Activated CD4-positive, alpha-beta T cell treated with anti-CD3 and anti-CD28 coated beads for 36 hours (primary cell): ENCODE measurements at regions of chr2 and their contacts with region 1.

Region 1: DNA sequence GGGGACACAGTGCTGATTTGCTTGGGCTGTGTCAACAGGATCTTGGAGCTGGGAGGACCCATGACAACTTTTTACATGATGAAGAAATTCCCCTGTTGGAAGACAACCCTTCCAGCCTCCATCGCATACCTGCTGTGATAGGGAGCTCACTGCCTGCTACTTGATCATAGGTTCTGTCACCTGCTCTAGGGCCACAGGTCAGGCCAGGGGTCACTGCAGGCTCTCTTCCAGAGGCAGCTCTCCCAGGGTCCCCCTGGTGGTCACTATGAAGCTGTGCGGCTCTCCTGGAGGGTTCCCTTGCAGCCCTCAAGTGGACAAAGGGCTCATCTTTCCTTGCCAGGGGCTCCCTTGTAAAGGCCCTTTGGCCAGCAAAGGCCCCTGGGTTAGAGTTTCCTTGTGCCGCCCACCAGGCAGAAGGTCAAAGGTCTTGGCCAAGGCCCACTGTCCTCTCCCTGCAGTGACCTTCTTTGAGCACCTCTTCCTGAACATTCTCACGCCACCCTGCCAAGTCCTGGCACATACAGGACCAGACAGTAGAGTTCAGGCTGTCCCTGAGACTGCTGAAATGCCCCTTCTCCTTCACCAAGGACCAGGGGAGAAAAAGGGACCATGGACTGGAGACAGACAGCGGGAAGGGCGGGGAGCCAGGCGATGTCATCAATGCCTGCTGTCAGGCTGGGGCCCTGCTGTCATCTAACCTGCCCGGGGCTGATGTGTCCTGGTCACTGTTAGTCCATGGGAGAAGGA is 345.1 kb downstream of the DYSF start:
- DNase-seq: peak; percentile 42
- ATAC-seq: no peak
- H3K4me3 Mint-ChIP-seq: no peak overlapping the region
- H3K27ac Mint-ChIP-seq: no peak overlapping the region
- H3K4me1 Mint-ChIP-seq: no peaks in the 10 kb centered on the region
- H3K27me3 Mint-ChIP-seq: no peaks in the 10 kb centered on the region

Region 2: GRCh38 chr2:71530641-71531332 is 267.7 kb before region 1 on chr2:
- CTCF ChIA-PET with region 1: interaction called, 3 read pairs
- POLR2A ChIA-PET with region 1: no interaction called
- intact Hi-C with region 1: loop called in 1 of 2 experiments (anchors 1 kb)
- DNase-seq: peak; percentile 46
- ATAC-seq: peak; percentile 65
- H3K4me3 Mint-ChIP-seq: no peak overlapping the region
- H3K27ac Mint-ChIP-seq: no peak overlapping the region
- H3K4me1 Mint-ChIP-seq: peaks cover 2% of the 10 kb centered on the region
- H3K27me3 Mint-ChIP-seq: peaks cover 29% of the 10 kb centered on the region

Region 3: DNA sequence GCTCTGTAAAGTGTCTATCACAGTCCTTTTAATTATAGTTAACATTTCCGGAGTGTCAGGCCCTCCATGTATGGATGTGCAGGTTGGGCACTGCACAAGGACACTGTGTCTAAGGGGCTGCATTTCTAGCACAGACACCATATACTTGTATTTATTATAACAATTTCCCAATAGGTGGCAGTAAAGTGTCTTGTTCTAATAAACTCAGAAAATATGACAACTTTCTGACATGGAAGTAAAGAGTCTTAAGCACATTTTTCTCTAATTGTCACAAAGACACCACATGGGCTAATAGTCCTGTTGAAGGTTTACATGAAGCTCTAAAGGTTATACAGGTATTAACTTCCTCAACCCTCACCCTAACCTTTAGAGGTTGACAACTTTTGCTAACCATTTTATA is 188.5 kb before region 1 on chr2:
- CTCF ChIA-PET with region 1: no interaction called
- POLR2A ChIA-PET with region 1: no interaction called
- intact Hi-C with region 1: loop called in 1 of 2 experiments (anchors 1 kb)
- DNase-seq: no peak
- ATAC-seq: no peak
- H3K4me3 Mint-ChIP-seq: no peak overlapping the region
- H3K27ac Mint-ChIP-seq: no peak overlapping the region
- H3K4me1 Mint-ChIP-seq: peaks cover 2% of the 10 kb centered on the region
- H3K27me3 Mint-ChIP-seq: peaks cover 2% of the 10 kb centered on the region

Region 4: DNA sequence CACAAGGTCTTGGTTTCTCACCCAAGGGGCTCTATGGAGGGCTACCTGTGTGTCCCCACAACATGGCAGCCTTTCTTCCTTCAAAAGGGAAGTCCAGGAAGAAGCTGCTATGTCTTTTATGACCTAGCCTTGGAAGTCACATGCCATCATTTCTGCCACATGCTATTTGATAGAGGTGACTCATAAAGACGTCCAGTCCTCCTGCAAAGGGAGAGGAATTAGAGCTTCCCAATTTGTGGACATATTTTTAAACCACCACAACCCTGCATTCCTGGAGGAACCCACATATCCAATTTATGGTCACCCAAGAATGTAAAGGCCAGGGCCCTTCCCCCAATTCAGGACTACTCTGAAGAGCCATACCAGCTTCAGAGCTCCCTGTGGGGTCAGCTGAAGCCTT is 103.0 kb after region 1 on chr2:
- CTCF ChIA-PET with region 1: no interaction called
- POLR2A ChIA-PET with region 1: no interaction called
- intact Hi-C with region 1: no loop called
- DNase-seq: no peak
- ATAC-seq: no peak
- H3K4me3 Mint-ChIP-seq: no peak overlapping the region
- H3K27ac Mint-ChIP-seq: no peak overlapping the region
- H3K4me1 Mint-ChIP-seq: no peaks in the 10 kb centered on the region
- H3K27me3 Mint-ChIP-seq: peaks cover 11% of the 10 kb centered on the region